Uterus (tissue), 4 donors: ENCODE measurements at regions of chr2 and their contacts with region 1.

Region 1: GRCh38 chr2:112481050-112481527 is 867 bp upstream of the TTL start:
- DNase-seq: peak; percentile 72 to 78
- H3K4me3 ChIP-seq: peak overlapping the region; percentile 70 to 75
- H3K27ac ChIP-seq: peak overlapping the region; percentile 87 to 92
- H3K4me1 ChIP-seq: peaks cover 0 to 11% of the 10 kb centered on the region in 2 donors
- H3K27me3 ChIP-seq: no peaks in the 10 kb centered on the region
- CTCF ChIP-seq: peak; percentile 78 to 94 (median 80)
- POLR2A ChIP-seq: no peak

Region 2: DNA sequence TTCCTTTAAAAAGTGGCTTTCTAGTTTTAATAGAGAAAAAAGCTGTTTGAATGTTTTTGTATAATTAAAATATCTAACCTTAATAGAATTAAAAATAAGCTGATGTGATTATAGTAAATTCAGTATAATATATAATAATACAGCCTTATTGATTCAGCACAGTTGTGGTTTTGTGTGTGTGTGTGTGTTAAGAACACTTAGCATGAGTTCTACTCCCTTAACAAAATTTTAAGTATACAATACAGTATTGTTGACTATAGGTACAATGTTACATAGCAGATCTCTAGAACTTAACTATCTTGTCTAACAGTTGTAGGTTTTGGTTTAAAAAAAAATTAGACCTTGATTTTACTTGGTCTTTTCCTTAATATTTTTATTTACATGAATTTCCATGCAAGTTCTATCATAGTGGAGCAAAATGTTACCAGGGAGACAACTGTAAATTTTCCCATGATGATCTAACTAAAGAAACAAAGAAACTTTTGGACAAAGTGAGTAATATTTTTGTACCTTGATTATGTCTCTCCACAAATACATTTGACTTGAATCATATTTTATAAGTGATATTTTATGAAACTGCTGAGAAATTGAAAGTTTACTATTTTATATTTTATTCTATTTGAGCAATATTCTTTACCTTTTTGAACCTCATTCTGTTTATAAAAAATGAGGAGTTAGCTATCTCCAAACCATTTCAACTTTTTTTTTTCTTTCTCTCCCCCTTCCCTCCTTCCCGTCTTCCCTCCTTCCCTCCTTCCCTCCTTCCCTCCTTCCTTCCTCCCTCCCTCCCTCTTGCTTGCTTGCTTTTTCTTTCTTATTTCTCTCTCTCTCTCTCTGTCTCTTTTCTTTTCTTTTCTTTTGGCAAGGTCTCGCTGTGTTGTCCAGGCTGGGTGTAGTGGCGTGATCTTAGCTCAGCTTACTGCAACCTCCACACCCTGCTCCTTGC is 159.4 kb before region 1 on chr2:
- intact Hi-C with region 1: no loop called
- DNase-seq: no peak
- H3K4me3 ChIP-seq: no peak overlapping the region
- H3K27ac ChIP-seq: no peak overlapping the region
- H3K4me1 ChIP-seq: no peaks in the 10 kb centered on the region
- H3K27me3 ChIP-seq: no peaks in the 10 kb centered on the region
- CTCF ChIP-seq: no peak
- POLR2A ChIP-seq: no peak

Region 3: GRCh38 chr2:112584134-112584890 is 103.2 kb after region 1 on chr2 and contains the start of gene CHCHD5:
- intact Hi-C with region 1: loop called (anchors 10 kb)
- DNase-seq: peak; percentile 95 to 96
- H3K4me3 ChIP-seq: peak within 1 kb of the TSS; percentile 58 to 63
- H3K27ac ChIP-seq: peak within 1 kb of the TSS; percentile 89 to 94
- H3K4me1 ChIP-seq: peaks cover 5 to 7% of the 10 kb centered on the region in 2 donors
- H3K27me3 ChIP-seq: no peaks in the 10 kb centered on the region
- CTCF ChIP-seq: peak; percentile 18 to 37 (median 26)
- POLR2A ChIP-seq: peak in 1 of 2 donors; percentile 35
- total RNA-seq, gene CHCHD5: 6.5 to 22.6 (median 8.4) TPM in 3 of 4 donors, not detected in the other